Breast epithelium (tissue), 4 donors: ENCODE measurements at regions of chr10 and their contacts with region 1.

Region 1: GRCh38 chr10:57333880-57334279 is 933.8 kb downstream of the IPMK start:
- DNase-seq: no peak
- H3K4me3 ChIP-seq: no peak overlapping the region
- H3K27ac ChIP-seq: no peak overlapping the region
- H3K4me1 ChIP-seq: no peaks in the 10 kb centered on the region
- H3K27me3 ChIP-seq: no peaks in the 10 kb centered on the region
- CTCF ChIP-seq: no peak
- POLR2A ChIP-seq: no peak

Region 2: DNA sequence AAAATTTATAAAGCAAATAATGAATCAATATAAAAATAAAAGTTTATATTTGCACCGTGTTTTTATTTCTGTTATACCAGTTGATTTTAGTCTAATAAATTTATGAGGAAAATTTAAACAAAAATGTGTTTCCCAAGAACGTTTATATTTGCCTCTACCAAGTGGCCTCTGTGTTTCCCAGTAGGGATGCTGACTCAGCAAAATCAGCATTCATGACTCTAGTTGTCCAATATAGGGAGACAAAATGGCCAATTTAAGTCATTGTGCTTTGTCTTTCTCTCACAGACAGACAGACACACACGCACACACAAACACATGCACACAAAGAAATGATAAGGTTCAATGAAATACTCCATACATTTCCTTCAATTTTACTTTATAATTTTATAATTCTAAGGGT is 30.3 kb before region 1 on chr10:
- intact Hi-C with region 1: no loop called
- DNase-seq: no peak
- H3K4me3 ChIP-seq: no peak overlapping the region
- H3K27ac ChIP-seq: no peak overlapping the region
- H3K4me1 ChIP-seq: no peaks in the 10 kb centered on the region
- H3K27me3 ChIP-seq: no peaks in the 10 kb centered on the region
- CTCF ChIP-seq: no peak
- POLR2A ChIP-seq: no peak

Region 3: DNA sequence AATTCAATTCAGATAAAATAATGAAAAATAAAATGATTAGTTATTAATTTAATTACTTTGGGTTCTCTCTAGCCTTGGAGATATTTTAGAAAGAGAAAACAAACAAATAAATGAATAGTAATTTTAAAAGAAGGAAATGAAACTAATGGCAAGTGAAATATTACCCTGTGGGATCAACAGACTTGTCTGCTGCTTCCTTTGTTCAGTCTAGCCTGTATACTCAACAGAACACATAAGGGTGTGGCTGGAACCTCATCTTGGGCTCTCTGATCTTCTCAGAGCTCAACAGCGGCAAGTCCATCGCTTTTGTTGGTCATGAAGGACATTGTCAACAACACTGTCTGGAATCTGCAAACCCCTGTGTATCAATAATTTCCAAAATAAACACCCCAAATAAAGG is 28.9 kb after region 1 on chr10:
- intact Hi-C with region 1: no loop called
- DNase-seq: no peak
- H3K4me3 ChIP-seq: no peak overlapping the region
- H3K27ac ChIP-seq: no peak overlapping the region
- H3K4me1 ChIP-seq: no peaks in the 10 kb centered on the region
- H3K27me3 ChIP-seq: no peaks in the 10 kb centered on the region
- CTCF ChIP-seq: no peak
- POLR2A ChIP-seq: no peak

Region 4: GRCh38 chr10:58070956-58071355 is 737.1 kb after region 1 on chr10:
- intact Hi-C with region 1: loop called (anchors 5 kb)
- DNase-seq: no peak
- H3K4me3 ChIP-seq: no peak overlapping the region
- H3K27ac ChIP-seq: no peak overlapping the region
- H3K4me1 ChIP-seq: no peaks in the 10 kb centered on the region
- H3K27me3 ChIP-seq: no peaks in the 10 kb centered on the region
- CTCF ChIP-seq: no peak
- POLR2A ChIP-seq: no peak